HepG2 (cell line): ENCODE measurements at regions of chr9 and their contacts with region 1.

Region 1: GRCh38 chr9:97386733-97387503 is 25.0 kb upstream of the TDRD7 start:
- DNase-seq: peak; percentile 75
- ATAC-seq: peak; percentile 67
- H3K4me3 ChIP-seq: peak overlapping the region; percentile 61 to 88 (median 68)
- H3K27ac ChIP-seq: peak overlapping the region; percentile 54
- H3K4me1 ChIP-seq: peaks cover 71% of the 10 kb centered on the region
- H3K27me3 ChIP-seq: no peaks in the 10 kb centered on the region
- CTCF ChIP-seq: peak; percentile 99
- EP300 ChIP-seq: no peak
- POLR2A ChIP-seq: 0 out of 4 replicates have a peak, but pooled peaks of 1 of the 2 experiments have one; percentile 41
- RAD21 ChIP-seq: peak; percentile 90

Region 2: GRCh38 chr9:97237951-97238851 is 148.7 kb before region 1 on chr9:
- CTCF ChIA-PET with region 1: no interaction called
- POLR2A ChIA-PET with region 1: interaction called, 3 read pairs
- in situ Hi-C with region 1: no loop called
- intact Hi-C with region 1: loop called (anchors 1 kb)
- DNase-seq: peak; percentile 52
- ATAC-seq: peak; percentile 96
- H3K4me3 ChIP-seq: peak overlapping the region; percentile 56 to 73 (median 58)
- H3K27ac ChIP-seq: peak overlapping the region; percentile 89
- H3K4me1 ChIP-seq: peaks cover 1% of the 10 kb centered on the region; the same call in 1 of the 2 replicates
- H3K27me3 ChIP-seq: no peaks in the 10 kb centered on the region
- CTCF ChIP-seq: 0 out of 2 replicates have a peak, but pooled peaks have one; percentile 2
- EP300 ChIP-seq: no peak
- POLR2A ChIP-seq: peak in 1 of 2 experiments; percentile 42
- RAD21 ChIP-seq: no peak

Region 3: DNA sequence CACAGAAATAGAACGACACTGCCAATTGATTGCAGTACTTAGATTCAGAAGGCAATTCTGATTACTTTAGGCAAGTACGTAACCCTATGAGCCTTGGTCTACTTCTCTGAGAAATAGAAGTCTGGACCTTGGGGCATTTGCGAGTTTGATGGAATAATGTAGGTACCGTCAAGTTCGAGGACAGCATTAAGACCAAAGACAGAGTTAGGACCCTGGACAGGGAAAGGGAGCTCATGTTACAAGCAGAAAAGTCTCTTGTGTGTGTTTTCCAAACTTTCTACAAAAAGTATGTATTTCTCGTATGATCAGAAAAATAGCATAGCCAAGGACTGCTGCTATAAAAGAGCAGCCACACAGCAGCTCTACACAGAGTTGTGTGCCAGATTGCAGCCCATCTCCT is 59.4 kb before region 1 on chr9:
- CTCF ChIA-PET with region 1: no interaction called
- POLR2A ChIA-PET with region 1: no interaction called
- in situ Hi-C with region 1: no loop called
- intact Hi-C with region 1: no loop called
- DNase-seq: no peak
- ATAC-seq: no peak
- H3K4me3 ChIP-seq: no peak overlapping the region
- H3K27ac ChIP-seq: no peak overlapping the region
- H3K4me1 ChIP-seq: no peaks in the 10 kb centered on the region
- H3K27me3 ChIP-seq: no peaks in the 10 kb centered on the region
- CTCF ChIP-seq: no peak
- EP300 ChIP-seq: no peak
- POLR2A ChIP-seq: no peak
- RAD21 ChIP-seq: no peak

Region 4: DNA sequence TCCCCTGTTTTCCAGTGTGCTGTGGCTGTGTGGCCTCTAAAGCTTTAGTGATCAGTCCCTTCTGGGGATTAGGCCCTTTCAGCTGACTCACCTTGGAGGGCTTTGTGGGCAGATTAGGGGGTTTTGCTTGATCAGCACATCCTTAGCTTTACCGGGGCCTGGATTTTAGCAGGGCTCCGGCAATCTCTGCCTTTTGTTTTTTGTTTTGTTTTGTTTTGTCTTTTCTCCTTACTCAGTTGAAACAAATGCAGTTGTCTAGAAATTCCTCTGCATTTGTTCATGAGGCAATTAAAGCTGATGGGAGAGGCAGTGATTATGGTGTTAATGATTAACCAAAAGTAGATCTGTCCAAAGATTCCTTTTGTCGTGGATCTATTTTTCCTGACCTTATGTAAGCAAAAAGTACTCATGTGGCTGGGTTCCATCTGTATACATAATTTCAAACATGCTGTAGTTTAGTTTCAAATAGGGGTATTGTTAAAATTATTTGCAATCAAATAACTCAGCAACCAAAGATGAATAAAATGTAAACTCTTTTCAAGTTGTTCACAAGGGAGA is 19.8 kb after region 1 on chr9:
- CTCF ChIA-PET with region 1: interaction called, 25 read pairs
- POLR2A ChIA-PET with region 1: interaction called, 39 read pairs
- in situ Hi-C with region 1: no loop called
- intact Hi-C with region 1: loop called (anchors 2 kb)
- DNase-seq: peak; percentile 89
- ATAC-seq: peak; percentile 58
- H3K4me3 ChIP-seq: peak overlapping the region; percentile 15 to 57 (median 35); a peak in 3 of 6 replicates
- H3K27ac ChIP-seq: peak overlapping the region; percentile 88
- H3K4me1 ChIP-seq: peaks cover 68% of the 10 kb centered on the region
- H3K27me3 ChIP-seq: no peaks in the 10 kb centered on the region
- CTCF ChIP-seq: no peak
- EP300 ChIP-seq: no peak; a peak in 1 of 4 replicates
- POLR2A ChIP-seq: no peak
- RAD21 ChIP-seq: no peak

Region 5: GRCh38 chr9:97598461-97599288 is 211.8 kb after region 1 on chr9:
- CTCF ChIA-PET with region 1: no interaction called
- POLR2A ChIA-PET with region 1: interaction called, 11 read pairs
- in situ Hi-C with region 1: no loop called
- intact Hi-C with region 1: no loop called
- DNase-seq: peak; percentile 69
- ATAC-seq: peak; percentile 91
- H3K4me3 ChIP-seq: no peak overlapping the region
- H3K27ac ChIP-seq: no peak overlapping the region
- H3K4me1 ChIP-seq: peaks cover 6% of the 10 kb centered on the region
- H3K27me3 ChIP-seq: no peaks in the 10 kb centered on the region
- CTCF ChIP-seq: peak; percentile 86
- EP300 ChIP-seq: no peak
- POLR2A ChIP-seq: no peak
- RAD21 ChIP-seq: peak; percentile 53; the same call in 1 of the 2 replicates